Posterior vena cava (tissue), 2 donors: ENCODE measurements at regions of chr14 and their contacts with region 1.

Region 1: GRCh38 chr14:37579274-37579673 is 15.8 kb downstream of the FOXA1 start:
- DNase-seq: no peak

Region 2: GRCh38 chr14:36810209-36810608 is 769.1 kb before region 1 on chr14:
- intact Hi-C with region 1: loop called in 1 of 2 experiments (anchors 5 kb)
- DNase-seq: no peak

Region 3: GRCh38 chr14:37493606-37494005 is 85.7 kb before region 1 on chr14:
- intact Hi-C with region 1: no loop called
- DNase-seq: no peak